Aorta (tissue), 5 donors: ENCODE measurements at regions of chr10 and their contacts with region 1.

Region 1: GRCh38 chr10:110137142-110137545 is 70.3 kb upstream of the MXI1 start:
- DNase-seq: no peak
- ATAC-seq: peak; percentile 93
- H3K4me3 ChIP-seq: no peak overlapping the region
- H3K27ac ChIP-seq: no peak overlapping the region
- H3K4me1 ChIP-seq: peaks cover 0 to 3% of the 10 kb centered on the region in 2 donors
- H3K27me3 ChIP-seq: no peaks in the 10 kb centered on the region

Region 2: GRCh38 chr10:109883859-109884771 is 253.0 kb before region 1 on chr10:
- intact Hi-C with region 1: loop called (anchors 5 to 10 kb)
- DNase-seq: peak; percentile 71 to 82
- ATAC-seq: peak; percentile 94
- H3K4me3 ChIP-seq: no peak overlapping the region
- H3K27ac ChIP-seq: peak overlapping the region in 1 of 2 donors; percentile 0
- H3K4me1 ChIP-seq: no peaks in the 10 kb centered on the region
- H3K27me3 ChIP-seq: no peaks in the 10 kb centered on the region

Region 3: DNA sequence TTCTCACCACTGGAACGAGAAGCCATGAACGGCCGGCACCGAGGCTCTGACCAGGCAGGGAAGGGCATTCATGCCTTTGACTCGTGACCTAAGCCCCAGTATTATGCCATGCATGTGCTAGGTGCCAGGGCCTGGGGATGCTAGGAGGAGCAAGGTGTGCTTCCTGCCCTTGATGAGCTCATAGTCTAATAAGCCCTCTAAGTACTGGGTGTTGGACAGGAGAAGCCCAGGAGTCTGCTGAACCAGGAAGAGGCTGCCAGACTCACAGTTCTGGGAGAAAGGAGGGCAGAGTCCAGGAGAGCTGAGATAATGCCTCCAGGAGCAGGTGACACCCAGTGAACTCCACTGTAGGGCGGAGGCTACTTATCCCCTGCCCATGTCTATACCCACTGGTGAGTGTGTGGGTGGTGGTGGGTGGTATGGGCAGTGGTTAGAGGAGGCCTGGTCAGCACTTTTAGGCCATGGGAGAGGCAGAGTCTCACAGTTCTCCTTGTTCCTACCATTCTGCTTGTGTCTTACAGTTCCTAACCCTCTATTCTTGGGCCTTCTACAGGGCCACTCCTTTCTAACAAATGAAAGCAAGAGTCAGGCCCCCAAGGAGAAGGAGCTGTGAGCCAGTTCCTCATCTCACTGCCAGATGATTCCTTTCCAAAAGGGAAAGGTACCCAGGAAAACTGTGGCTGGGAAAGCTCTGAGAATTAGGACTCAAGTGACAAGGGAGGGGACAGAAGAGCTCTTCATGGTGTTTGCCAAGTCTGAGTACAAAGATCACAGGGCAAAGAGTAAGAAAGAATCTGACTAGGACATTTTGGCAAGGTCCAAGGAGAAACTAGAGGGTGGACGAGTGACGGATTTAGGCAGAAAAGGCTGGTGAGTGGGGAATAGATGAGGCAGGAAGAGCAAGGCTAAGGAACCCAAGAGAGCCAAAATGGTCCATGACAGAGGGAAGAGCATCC is 66.6 kb after region 1 on chr10:
- intact Hi-C with region 1: loop called (anchors 2 to 5 kb)
- DNase-seq: no peak
- ATAC-seq: no peak
- H3K4me3 ChIP-seq: no peak overlapping the region
- H3K27ac ChIP-seq: no peak overlapping the region
- H3K4me1 ChIP-seq: no peaks in the 10 kb centered on the region
- H3K27me3 ChIP-seq: no peaks in the 10 kb centered on the region

Region 4: DNA sequence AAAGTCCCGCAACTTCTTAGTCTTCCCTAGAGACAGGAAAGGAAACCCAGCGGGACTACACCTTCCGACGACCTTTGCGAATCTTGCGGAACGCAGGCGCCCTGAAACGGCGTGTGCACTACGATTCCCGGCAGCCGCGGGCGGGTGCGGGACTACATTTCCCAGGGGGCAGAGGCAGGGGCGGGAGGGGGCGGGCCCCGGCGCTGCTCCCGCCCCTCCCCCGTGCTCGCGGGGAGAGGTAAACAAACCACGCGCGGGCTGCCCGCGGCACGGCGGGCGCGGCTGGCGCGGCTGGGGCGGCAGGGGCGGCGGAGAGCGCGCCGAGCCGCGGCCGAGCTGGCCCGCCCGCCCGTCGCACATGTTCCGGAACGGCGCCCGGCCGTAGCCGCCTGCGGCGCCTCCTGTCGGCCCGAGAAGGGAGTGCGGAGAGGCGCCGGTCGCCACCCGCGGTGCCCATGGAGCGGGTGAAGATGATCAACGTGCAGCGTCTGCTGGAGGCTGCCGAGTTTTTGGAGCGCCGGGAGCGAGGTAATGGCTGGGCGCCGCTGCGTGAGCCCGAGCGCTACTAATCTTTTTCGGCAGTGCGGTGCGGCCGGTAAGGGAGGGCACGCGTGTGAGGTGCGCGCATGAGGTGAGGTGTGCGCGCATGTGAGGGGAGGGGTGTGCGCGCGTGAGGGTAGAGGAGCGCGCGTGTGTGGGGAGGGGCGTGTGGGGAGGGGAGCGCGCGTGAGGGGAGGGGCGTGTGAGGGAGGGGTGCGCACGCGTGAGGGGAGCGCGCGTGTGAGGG is 88.8 kb after region 1 on chr10:
- intact Hi-C with region 1: loop called in 1 of 2 experiments (anchors 5 kb)
- DNase-seq: peak; percentile 95 to 96
- ATAC-seq: peak; percentile 88
- H3K4me3 ChIP-seq: peak overlapping the region; percentile 54 to 91
- H3K27ac ChIP-seq: peak overlapping the region; percentile 15 to 78
- H3K4me1 ChIP-seq: peaks cover 4% of the 10 kb centered on the region in 2 donors
- H3K27me3 ChIP-seq: no peaks in the 10 kb centered on the region

Region 5: DNA sequence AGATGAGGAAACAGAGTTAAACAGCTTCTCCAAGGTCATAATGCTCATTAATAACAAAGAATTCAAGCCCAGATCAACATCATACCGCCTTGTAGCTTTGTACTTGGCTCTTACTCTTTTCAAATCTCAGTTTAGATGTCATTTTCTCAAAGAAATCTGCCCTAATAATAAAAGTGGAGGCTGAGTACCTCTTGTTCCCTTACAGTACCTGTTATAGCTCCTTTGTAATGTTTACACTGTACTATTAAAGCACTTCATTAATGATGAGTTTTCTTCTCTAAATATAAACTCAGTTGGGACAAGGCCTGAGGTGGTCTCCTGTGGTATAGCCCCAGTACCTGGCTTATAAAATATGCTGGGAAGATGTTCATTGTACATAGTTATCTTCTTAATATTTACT is 159.8 kb after region 1 on chr10:
- intact Hi-C with region 1: loop called in 1 of 2 experiments (anchors 5 kb)
- DNase-seq: no peak
- ATAC-seq: no peak
- H3K4me3 ChIP-seq: no peak overlapping the region
- H3K27ac ChIP-seq: peak overlapping the region in 1 of 2 donors; percentile 67
- H3K4me1 ChIP-seq: peaks cover 3 to 6% of the 10 kb centered on the region in 2 donors
- H3K27me3 ChIP-seq: no peaks in the 10 kb centered on the region

Region 6: GRCh38 chr10:110556969-110557601 is 419.9 kb after region 1 on chr10:
- intact Hi-C with region 1: loop called in 1 of 2 experiments (anchors 5 kb)
- DNase-seq: peak in 1 of 2 donors; percentile 58
- ATAC-seq: no peak
- H3K4me3 ChIP-seq: no peak overlapping the region
- H3K27ac ChIP-seq: no peak overlapping the region
- H3K4me1 ChIP-seq: no peaks in the 10 kb centered on the region
- H3K27me3 ChIP-seq: no peaks in the 10 kb centered on the region